Mammary epithelial cell (primary cell): ENCODE measurements at regions of chrX and their contacts with region 1.

Region 1: DNA sequence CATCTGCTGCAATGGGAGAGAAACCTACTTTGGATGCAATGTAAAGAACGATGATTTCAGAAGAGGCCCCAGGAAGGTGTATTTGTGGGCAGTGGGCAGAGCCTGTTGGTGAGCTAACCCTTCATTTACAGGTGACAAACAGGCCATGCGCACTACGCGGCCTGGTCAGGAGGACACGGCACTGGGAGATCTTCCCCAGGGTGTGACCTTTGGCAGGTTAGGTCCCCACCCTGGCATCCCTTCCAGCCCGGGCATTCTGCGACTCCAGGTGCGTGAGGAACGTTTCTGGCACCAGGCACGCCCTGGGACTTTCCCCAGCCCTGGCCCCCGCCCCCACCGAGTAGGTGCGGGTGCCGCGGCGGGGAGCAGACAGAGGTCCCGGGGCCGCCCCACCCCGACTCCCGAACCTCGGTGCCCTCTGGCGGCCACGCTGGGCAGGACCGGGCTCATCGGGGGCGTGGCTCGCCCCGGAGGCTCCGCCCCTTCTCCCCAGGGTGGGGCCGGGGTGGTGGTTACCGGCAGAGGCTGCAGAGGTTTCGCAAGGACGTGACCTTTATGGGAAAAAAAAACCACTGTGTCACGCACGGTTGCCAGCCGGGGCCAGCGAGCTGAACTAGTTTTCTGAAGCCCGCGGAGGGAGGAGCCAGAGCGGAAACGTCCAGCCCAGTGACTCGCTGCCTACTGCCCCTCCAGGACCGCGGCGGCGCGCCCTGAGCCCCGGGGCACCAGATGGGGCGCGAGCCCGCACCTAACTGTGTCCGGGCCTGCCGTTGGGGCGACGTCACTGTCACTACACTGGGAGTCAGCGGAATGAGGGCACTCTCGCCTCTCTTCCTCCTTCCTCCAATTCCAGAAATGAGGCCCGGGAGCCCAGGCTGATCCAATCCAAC is 5.0 kb upstream of the NYX start:
- DNase-seq: peak; percentile 78
- H3K4me3 ChIP-seq: peak overlapping the region in 2 of 3 experiments; percentile 12 to 30
- H3K27ac ChIP-seq: no peak overlapping the region
- H3K4me1 ChIP-seq: no peaks in the 10 kb centered on the region
- H3K27me3 ChIP-seq: peaks cover 3% of the 10 kb centered on the region
- CTCF ChIP-seq: peak; percentile 23 to 65

Region 2: GRCh38 chrX:41333744-41334259 is 108.4 kb before region 1 on chrX and contains the start of gene DDX3X:
- CTCF ChIA-PET with region 1: interaction called, 3 read pairs
- dilution Hi-C with region 1: no loop called
- in situ Hi-C with region 1: no loop called
- intact Hi-C with region 1: loop called (anchors 1 kb)
- DNase-seq: peak; percentile 91
- H3K4me3 ChIP-seq: peak within 1 kb of the TSS; percentile 77 to 99 (median 89)
- H3K27ac ChIP-seq: peak within 1 kb of the TSS; percentile 99
- H3K4me1 ChIP-seq: peaks cover 44% of the 10 kb centered on the region
- H3K27me3 ChIP-seq: no peaks in the 10 kb centered on the region
- CTCF ChIP-seq: no peak
- total RNA-seq, gene DDX3X: 230 to 247 TPM

Region 3: DNA sequence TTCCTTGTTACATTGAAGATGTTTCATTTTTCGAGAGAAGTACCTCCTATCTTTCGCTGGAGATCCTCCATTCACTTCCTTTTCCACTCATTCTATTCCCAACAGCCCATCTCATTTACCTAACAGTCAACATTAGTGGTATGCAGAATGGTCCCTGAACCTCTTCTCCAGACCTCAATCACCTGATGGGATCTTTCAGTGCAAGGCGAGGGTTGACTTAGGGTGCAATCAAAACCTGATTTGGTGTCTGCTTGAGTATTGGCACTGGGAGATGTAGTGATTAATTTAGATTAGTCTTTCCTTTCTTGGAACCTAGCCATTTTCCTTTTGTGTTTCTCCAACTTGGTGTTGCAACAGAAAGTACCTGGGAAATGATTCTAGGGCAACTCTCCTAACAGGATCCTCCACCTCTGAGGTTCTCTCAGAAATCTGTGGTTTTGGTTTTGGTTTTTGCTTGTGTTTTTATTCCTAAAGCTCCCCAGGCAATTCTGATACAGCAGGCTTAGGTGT is 89.8 kb before region 1 on chrX:
- CTCF ChIA-PET with region 1: no interaction called
- dilution Hi-C with region 1: no loop called
- in situ Hi-C with region 1: no loop called
- intact Hi-C with region 1: loop called (anchors 1 kb)
- DNase-seq: peak; percentile 74
- H3K4me3 ChIP-seq: no peak overlapping the region
- H3K27ac ChIP-seq: no peak overlapping the region
- H3K4me1 ChIP-seq: no peaks in the 10 kb centered on the region
- H3K27me3 ChIP-seq: no peaks in the 10 kb centered on the region
- CTCF ChIP-seq: no peak

Region 4: DNA sequence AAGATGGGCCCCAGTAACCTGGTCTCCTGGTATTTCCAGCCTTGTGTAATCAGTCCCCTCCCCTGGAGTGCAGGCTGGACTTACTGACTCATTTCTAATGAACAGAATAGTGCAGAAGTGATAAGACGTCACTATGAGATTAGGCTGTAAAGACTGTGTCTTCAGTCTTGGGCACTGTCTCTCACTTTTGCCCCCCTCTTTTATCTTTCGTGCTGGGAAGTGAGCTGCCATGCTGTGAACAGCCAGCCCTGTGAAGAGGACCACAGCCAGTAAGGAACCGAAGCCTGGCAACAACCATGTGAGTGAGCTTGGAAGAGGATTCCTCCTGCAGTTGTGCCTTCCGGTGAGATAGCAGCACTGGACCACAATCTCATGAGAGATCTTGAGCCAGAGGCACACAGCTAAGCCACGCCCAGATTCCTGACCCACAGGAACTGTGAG is 179.1 kb after region 1 on chrX:
- CTCF ChIA-PET with region 1: no interaction called
- dilution Hi-C with region 1: no loop called
- in situ Hi-C with region 1: no loop called
- intact Hi-C with region 1: no loop called
- DNase-seq: peak; percentile 14
- H3K4me3 ChIP-seq: no peak overlapping the region
- H3K27ac ChIP-seq: no peak overlapping the region
- H3K4me1 ChIP-seq: peaks cover 4% of the 10 kb centered on the region
- H3K27me3 ChIP-seq: peaks cover 2% of the 10 kb centered on the region
- CTCF ChIP-seq: no peak